Breast epithelium (tissue), 4 donors: ENCODE measurements at regions of chr20 and their contacts with region 1.

Region 1: DNA sequence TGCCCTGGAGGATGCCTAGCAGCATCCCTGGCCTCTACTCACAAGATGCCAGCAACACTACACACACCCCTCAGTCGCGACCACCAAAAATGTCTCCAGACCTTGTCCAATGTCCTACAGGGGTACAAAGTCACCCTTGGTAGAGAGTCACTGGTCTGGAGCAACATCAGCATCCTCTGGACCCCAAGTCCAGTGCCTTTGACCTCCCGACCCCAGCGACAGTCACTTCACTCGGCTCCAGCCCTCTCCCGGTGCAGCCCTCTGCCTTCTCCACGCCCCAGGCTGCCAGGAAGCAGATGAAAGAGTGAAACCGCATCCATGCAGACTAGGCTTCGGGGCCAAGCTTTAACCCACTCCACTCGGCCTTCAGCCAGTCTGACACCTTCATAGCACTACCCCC is 92.0 kb upstream of the SRSF6 start:
- DNase-seq: no peak
- H3K4me3 ChIP-seq: no peak overlapping the region
- H3K27ac ChIP-seq: no peak overlapping the region
- H3K4me1 ChIP-seq: no peaks in the 10 kb centered on the region
- H3K27me3 ChIP-seq: peaks cover 0 to 7% of the 10 kb centered on the region in 2 donors
- CTCF ChIP-seq: no peak
- POLR2A ChIP-seq: no peak

Region 2: DNA sequence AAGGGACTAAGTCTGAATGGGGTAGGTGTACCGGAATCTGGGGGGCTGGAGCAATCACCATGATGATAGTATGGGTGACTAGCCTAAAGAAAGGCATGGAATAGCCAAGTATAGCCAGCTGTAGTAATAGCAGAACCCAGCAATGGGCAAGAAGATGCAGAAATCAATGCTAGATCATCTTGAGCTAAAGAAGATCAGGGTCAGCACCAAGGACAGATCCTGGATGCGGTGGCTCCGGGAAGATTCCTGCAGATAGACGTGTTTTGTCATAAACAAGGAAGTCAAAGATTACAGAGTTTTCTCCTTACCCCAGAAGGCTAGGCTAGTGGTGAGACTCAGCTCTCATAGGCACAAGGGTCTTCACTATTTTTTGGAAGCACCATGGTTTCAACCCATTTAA is 1185.9 kb before region 1 on chr20:
- intact Hi-C with region 1: loop called (anchors 5 kb)
- DNase-seq: no peak
- H3K4me3 ChIP-seq: no peak overlapping the region
- H3K27ac ChIP-seq: no peak overlapping the region
- H3K4me1 ChIP-seq: no peaks in the 10 kb centered on the region
- H3K27me3 ChIP-seq: no peaks in the 10 kb centered on the region
- CTCF ChIP-seq: no peak
- POLR2A ChIP-seq: no peak